Lower leg skin (tissue), 4 donors: ENCODE measurements at regions of chr11 and their contacts with region 1.

Region 1: DNA sequence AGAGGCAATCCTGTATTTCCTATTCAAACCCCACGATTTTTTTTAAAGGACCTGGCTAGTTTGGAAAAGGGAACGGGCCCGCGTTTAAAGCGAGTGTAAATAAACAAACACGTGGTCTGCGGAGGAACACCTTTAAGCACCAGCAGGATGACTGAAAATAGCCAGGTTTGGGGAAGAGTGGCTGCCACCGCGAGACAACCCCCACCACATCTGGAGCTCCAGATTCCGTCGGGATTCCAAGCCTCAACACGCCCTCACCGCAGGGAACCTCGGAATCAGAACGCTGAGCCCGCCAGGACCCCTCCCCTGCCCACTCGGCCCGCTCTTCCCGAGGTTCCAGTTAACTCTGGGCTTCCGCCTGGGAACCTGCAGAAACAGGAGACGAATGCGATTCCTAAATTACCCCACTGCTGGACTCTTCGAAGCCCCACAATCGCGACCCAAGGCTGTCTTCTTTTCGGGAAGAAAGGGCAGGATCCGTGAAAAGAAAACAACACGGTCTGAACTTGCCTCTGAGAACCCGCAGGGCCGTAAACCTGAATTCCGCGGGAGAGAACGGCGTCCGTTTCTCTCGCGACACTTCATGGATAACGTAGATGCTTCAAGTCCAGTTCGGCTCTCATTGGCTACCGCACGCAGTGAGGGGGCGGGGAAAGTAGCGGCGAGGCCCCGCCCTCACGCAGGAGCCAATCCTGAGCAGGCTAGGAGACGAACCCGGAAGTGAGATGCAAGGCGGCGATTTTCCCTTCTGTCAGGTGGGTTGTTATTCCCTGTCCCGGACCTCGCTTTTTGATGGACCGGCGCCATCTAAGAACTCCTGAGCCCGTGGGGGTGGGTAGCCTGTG is at the starts of genes ANKRD49 and MRE11:
- DNase-seq: peak; percentile 98 to 100
- H3K4me3 ChIP-seq: peak within 1 kb of the TSS; percentile 99
- CTCF ChIP-seq: no peak
- POLR2A ChIP-seq: peak in 1 of 2 donors; percentile 14
- total RNA-seq, gene ANKRD49: 7.1 to 19.6 (median 15.4) TPM
- total RNA-seq, gene MRE11: 11.7 to 25.3 (median 13.4) TPM

Region 2: DNA sequence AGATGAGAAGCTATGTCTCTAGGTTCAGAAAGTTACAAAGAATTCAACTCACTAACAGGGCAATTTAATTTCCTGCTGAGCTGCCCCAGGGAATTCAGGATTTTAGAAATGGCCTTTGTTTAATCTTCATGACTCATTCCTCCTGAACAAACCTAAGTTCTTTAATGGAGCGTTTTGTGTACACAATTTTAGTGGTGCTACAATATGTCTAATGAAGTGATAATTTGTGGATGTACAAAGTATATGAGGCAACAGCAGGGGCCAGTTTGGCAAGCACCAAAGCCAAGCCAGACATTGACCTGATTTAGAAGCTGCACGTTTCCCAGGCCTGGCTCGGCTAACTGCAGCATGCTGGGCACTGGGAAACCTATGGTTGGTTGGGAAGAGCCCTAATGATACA is 506.8 kb before region 1 on chr11:
- intact Hi-C with region 1: no loop called
- DNase-seq: no peak
- H3K4me3 ChIP-seq: no peak overlapping the region
- CTCF ChIP-seq: no peak
- POLR2A ChIP-seq: no peak

Region 3: DNA sequence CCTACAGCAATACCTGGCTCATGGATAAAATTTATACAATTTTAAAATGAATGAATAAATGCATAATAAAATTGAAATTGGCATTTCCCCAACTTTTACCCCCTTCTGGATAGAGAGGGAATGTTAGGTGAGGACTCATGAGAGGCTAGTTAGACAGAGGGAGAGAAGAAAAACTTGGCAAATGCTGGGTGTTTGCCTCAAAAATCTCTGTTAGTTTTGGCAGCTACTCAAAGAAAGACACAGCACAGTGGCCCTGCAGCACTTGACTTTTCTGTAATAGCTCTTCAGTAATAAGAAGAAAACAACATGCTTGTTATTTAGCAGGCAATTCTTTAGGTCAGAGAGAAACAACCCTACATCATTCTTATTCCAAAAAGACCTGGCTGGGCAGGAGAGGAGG is 209.8 kb before region 1 on chr11:
- intact Hi-C with region 1: no loop called
- DNase-seq: no peak
- H3K4me3 ChIP-seq: no peak overlapping the region
- CTCF ChIP-seq: no peak
- POLR2A ChIP-seq: no peak

Region 4: GRCh38 chr11:95671768-95672167 is 1178.3 kb after region 1 on chr11:
- intact Hi-C with region 1: loop called (anchors 5 kb)
- DNase-seq: no peak
- H3K4me3 ChIP-seq: no peak overlapping the region
- CTCF ChIP-seq: no peak
- POLR2A ChIP-seq: no peak